Calu3 (cell line): ENCODE measurements at regions of chr11 and their contacts with region 1.

Region 1: DNA sequence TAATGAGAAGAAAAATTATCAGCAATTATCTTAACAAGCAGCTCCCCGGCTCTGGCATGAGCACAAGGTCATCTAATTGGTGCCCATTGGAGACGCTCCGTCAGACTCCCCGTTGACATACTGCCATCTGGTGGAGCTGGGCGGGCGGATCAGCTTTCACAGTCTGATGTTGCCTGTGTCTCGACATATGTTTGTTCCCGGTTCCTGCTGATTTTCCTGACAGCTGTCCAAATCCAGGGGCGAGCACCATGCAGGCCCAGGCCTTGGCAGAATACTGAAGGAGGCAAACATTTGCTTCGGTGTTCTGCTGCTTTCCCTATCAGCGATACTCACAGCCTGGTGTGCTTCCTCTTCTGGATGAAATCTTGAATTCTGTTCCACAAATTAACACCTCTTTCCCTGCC is 43.8 kb upstream of the BARX2 start:
- DNase-seq: peak; percentile 82
- H3K4me3 Mint-ChIP-seq: no peak overlapping the region
- H3K27ac Mint-ChIP-seq: no peak overlapping the region
- H3K4me1 Mint-ChIP-seq: peaks cover 8% of the 10 kb centered on the region
- H3K27me3 Mint-ChIP-seq: no peaks in the 10 kb centered on the region
- CTCF ChIP-seq: peak; percentile 66

Region 2: GRCh38 chr11:128884703-128885338 is 447.1 kb before region 1 on chr11:
- CTCF ChIA-PET with region 1: no interaction called
- intact Hi-C with region 1: loop called (anchors 10 kb)
- DNase-seq: peak; percentile 76
- H3K4me3 Mint-ChIP-seq: no peak overlapping the region
- H3K27ac Mint-ChIP-seq: no peak overlapping the region
- H3K4me1 Mint-ChIP-seq: peaks cover 10% of the 10 kb centered on the region
- H3K27me3 Mint-ChIP-seq: peaks cover 45% of the 10 kb centered on the region
- CTCF ChIP-seq: peak; percentile 56

Region 3: DNA sequence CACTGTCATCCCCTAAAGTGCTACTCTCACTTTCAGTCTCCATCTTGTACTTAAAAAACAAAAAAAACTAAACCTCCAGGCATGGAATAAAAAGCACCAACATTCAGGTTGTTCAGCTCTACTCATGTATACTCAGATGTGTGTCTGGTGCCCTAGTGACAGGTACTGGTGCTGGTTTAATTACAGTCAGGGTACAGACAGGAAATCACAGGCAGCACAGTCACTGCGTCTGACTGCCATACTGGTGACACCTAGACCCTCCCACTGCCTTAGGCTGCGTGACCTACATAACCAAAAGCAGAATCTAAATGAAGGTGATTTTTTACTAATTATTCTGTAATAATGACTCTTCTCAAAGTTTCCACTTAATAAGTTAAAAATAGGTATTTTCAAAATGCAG is 139.7 kb before region 1 on chr11 and contains the start of gene ARHGAP32:
- CTCF ChIA-PET with region 1: no interaction called
- intact Hi-C with region 1: loop called (anchors 5 kb)
- DNase-seq: peak; percentile 44
- H3K4me3 Mint-ChIP-seq: no peak within 1 kb of the TSS
- H3K27ac Mint-ChIP-seq: no peak within 1 kb of the TSS
- H3K4me1 Mint-ChIP-seq: no peaks in the 10 kb centered on the region
- H3K27me3 Mint-ChIP-seq: no peaks in the 10 kb centered on the region
- CTCF ChIP-seq: no peak
- total RNA-seq, gene ARHGAP32: 40.1 and 46.0 TPM in 2 replicates

Region 4: DNA sequence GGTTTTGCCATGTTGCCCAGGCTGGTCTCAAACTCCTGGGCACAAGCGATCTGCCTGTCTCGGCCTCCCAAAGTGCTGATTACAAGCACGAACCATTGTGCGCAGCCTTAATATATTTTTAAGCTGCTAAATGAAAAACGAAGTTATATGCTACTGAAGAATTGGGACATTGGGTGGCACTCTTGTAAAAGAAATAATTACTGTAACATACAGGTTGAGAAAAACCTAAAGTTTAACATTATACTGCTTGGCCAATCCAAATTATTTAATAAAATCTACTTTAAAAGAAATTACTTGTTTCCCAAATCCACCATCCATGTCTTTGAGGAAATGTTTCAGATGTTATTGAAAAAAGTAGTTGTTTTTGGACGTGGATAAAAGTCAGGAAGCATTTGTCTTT is 101.9 kb before region 1 on chr11:
- CTCF ChIA-PET with region 1: interaction called, 11 read pairs
- intact Hi-C with region 1: loop called (anchors 1 kb)
- DNase-seq: no peak
- H3K4me3 Mint-ChIP-seq: no peak overlapping the region
- H3K27ac Mint-ChIP-seq: no peak overlapping the region
- H3K4me1 Mint-ChIP-seq: peaks cover 15% of the 10 kb centered on the region
- H3K27me3 Mint-ChIP-seq: no peaks in the 10 kb centered on the region
- CTCF ChIP-seq: no peak

Region 5: GRCh38 chr11:129279326-129280026 is 52.4 kb before region 1 on chr11:
- CTCF ChIA-PET with region 1: interaction called, 4 read pairs
- intact Hi-C with region 1: loop called (anchors 5 kb)
- DNase-seq: peak; percentile 89
- H3K4me3 Mint-ChIP-seq: peak overlapping the region; percentile 92
- H3K27ac Mint-ChIP-seq: peak overlapping the region; percentile 83
- H3K4me1 Mint-ChIP-seq: peaks cover 65% of the 10 kb centered on the region
- H3K27me3 Mint-ChIP-seq: no peaks in the 10 kb centered on the region
- CTCF ChIP-seq: no peak

Region 6: GRCh38 chr11:129853518-129854236 is 521.8 kb after region 1 on chr11:
- CTCF ChIA-PET with region 1: no interaction called
- intact Hi-C with region 1: no loop called
- DNase-seq: peak; percentile 74
- H3K4me3 Mint-ChIP-seq: no peak overlapping the region
- H3K27ac Mint-ChIP-seq: peak overlapping the region; percentile 63
- H3K4me1 Mint-ChIP-seq: peaks cover 18% of the 10 kb centered on the region
- H3K27me3 Mint-ChIP-seq: no peaks in the 10 kb centered on the region
- CTCF ChIP-seq: no peak